Mammary epithelial cell (primary cell): ENCODE measurements at regions of chr10 and their contacts with region 1.

Region 1: GRCh38 chr10:95579835-95580535 is 18.8 kb upstream of the SORBS1 start:
- DNase-seq: no peak
- H3K4me3 ChIP-seq: no peak overlapping the region
- H3K27ac ChIP-seq: no peak overlapping the region
- H3K4me1 ChIP-seq: no peaks in the 10 kb centered on the region
- H3K27me3 ChIP-seq: no peaks in the 10 kb centered on the region
- CTCF ChIP-seq: no peak

Region 2: DNA sequence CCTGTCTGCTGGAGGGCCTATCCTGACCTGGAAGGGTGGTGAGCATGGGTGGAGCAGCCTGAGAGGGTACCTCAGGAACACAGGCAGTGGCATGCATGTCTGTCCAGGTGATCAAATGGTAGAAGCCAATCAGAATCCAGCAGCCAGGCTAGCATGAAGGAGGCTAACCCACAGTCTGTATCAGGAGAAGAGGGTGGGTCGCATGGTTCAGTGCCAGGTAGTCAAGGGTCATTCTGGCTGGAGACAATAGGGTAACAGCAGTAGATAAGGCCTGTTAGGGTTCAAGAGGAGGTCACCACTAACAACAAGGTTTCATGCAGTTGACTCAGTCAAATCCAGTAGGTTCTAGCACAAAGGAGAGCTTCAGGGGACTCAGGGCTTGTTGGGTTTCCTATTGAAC is 66.2 kb after region 1 on chr10:
- CTCF ChIA-PET with region 1: no interaction called
- dilution Hi-C with region 1: loop called (anchors 5 kb)
- in situ Hi-C with region 1: no loop called
- intact Hi-C with region 1: no loop called
- DNase-seq: no peak
- H3K4me3 ChIP-seq: no peak overlapping the region
- H3K27ac ChIP-seq: no peak overlapping the region
- H3K4me1 ChIP-seq: no peaks in the 10 kb centered on the region
- H3K27me3 ChIP-seq: no peaks in the 10 kb centered on the region
- CTCF ChIP-seq: no peak